GM18951 (cell line): ENCODE measurements at regions of chr2 and their contacts with region 1.

Region 1: DNA sequence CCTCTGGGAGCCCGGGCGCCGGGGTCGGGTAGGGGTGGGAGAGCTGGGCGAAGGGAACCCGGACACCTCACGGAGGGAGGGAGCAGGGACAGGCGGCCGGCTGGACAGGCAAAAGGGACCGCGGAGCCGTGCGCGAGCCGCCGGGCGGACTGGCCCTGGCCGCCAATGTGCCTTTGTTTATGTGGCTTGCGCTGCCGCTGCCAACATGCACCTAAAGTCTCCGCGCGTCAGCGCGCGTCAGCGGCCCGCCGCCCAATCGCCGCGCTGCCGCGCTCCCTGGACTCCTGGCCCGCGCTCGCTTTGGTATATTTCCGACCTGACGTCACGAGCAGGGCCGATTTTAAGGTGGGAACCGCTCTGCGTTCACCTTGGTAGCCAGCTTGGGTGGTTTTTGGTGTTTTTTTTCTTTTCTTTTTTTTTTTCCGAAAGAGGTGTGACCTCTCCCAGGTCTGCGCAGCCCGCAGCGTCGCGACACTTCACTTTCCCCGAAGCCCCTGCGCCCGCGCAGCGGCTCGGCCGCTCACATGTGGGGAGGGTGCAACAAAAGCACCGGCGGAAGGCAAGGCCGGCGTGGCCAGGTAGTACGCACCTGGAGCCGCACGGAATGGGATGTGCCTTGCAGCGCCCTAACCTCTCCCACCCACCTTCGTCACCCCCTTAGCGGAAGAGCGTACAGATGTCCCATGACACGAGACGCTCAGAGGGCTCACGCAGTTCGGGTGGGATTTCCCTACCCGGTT is at the start of gene NR4A2:
- POLR2A ChIP-seq: peak; percentile 50

Region 2: GRCh38 chr2:156589381-156590079 is 256.8 kb after region 1 on chr2:
- in situ Hi-C with region 1: loop called (anchors 10 kb)
- POLR2A ChIP-seq: no peak

Region 3: GRCh38 chr2:157611110-157611509 is 1278.4 kb after region 1 on chr2:
- in situ Hi-C with region 1: no loop called
- POLR2A ChIP-seq: no peak